ENCODE measurements at regions of chr4 and their contacts with region 1.

Region 1: GRCh38 chr4:174282836-174283506 is 496 bp downstream of the FBXO8 start:
- DNase-seq: peak; percentile 63 to 75 (median 68)
- H3K4me3 ChIP-seq: peak overlapping the region; percentile 90
- H3K27ac ChIP-seq: peak overlapping the region; percentile 88 to 95
- H3K4me1 ChIP-seq: no peaks in the 10 kb centered on the region
- H3K27me3 ChIP-seq: no peaks in the 10 kb centered on the region
- CTCF ChIP-seq: no peak
- EP300 ChIP-seq: no peak
- POLR2A ChIP-seq: no peak

Region 2: DNA sequence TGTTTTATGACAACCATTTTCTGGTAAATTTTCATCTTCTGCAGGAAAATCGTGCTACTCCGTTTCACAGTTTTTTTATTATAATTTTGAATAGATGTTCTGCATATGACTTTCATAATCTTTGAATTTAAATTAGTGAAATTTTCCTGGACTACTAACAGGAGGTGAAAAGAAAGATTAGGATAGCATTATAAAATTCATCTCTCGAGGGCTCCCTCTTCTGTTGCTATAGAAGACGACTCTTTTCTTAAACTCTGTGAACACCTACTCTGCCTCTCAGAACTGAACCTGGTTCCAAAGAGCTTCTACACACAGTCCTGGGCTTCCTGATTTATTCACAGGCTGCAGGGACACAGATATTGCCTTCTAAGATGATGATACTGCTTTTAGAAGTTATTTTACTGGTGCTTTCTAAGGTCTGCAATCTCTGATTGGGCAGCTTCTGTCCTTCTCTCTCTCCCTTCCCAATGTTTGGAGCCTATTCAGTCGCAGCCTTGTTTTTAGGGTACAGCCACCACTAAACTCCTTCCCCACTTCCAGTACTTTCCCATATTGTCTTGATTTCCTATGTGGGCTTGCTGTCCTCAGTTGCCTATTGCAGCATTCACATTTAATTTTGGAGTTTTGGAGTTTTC is 922.3 kb before region 1 on chr4:
- intact Hi-C with region 1: loop called in 1 of 4 experiments (anchors 10 kb)
- DNase-seq: no peak
- H3K4me3 ChIP-seq: no peak overlapping the region
- H3K27ac ChIP-seq: no peak overlapping the region
- H3K4me1 ChIP-seq: peaks cover 2% of the 10 kb centered on the region
- H3K27me3 ChIP-seq: no peaks in the 10 kb centered on the region
- CTCF ChIP-seq: no peak
- EP300 ChIP-seq: no peak
- POLR2A ChIP-seq: no peak

Region 3: DNA sequence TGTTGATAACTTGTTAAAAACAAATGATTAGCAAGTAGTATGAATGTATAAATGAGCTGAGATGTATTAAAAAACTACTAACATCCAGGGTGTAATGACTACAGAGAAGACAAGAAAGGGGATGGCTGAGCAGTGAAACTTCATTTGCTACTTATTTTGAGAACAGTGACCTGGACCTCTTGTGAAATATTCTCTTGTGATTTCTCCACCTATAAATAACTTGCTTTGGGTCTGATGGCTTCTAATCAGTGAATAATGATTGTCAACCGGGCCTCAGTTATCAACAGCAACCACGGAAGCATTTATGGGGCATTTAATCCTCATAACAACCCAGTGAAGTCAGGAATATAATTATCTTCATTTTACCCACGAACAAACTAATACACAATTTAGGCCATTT is 598.7 kb before region 1 on chr4:
- intact Hi-C with region 1: no loop called
- DNase-seq: no peak
- H3K4me3 ChIP-seq: no peak overlapping the region
- H3K27ac ChIP-seq: no peak overlapping the region
- H3K4me1 ChIP-seq: no peaks in the 10 kb centered on the region
- H3K27me3 ChIP-seq: no peaks in the 10 kb centered on the region
- CTCF ChIP-seq: no peak
- EP300 ChIP-seq: no peak
- POLR2A ChIP-seq: no peak